ENCODE measurements at regions of chrX and their contacts with region 1.

Region 1: GRCh38 chrX:24081661-24082264 is 27.0 kb downstream of the EIF2S3 start:
- DNase-seq: peak; percentile 21
- H3K4me3 Mint-ChIP-seq: peak overlapping the region; percentile 11
- H3K27ac Mint-ChIP-seq: no peak overlapping the region
- H3K4me1 Mint-ChIP-seq: peaks cover 13% of the 10 kb centered on the region
- H3K27me3 Mint-ChIP-seq: no peaks in the 10 kb centered on the region

Region 2: DNA sequence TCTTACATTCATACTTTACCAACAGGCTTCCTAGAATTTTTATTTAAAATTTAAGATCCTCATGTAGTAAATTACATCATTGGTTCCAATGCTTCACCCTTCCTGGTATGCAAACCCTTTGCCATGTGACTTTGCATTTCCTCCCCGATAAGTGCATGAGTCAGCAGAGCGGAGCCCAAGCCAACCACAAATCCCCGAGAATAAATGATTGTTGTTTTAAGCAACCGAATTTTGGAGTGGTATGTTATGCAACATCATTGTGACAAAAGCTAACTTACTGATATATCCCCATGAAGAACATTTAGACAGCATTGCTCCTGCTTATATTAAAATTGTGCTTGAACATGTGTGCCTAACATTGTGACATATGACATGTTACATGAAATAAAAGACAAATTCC is 1281.4 kb before region 1 on chrX:
- intact Hi-C with region 1: no loop called
- DNase-seq: no peak
- H3K4me3 Mint-ChIP-seq: no peak overlapping the region
- H3K27ac Mint-ChIP-seq: no peak overlapping the region
- H3K4me1 Mint-ChIP-seq: no peaks in the 10 kb centered on the region
- H3K27me3 Mint-ChIP-seq: no peaks in the 10 kb centered on the region

Region 3: GRCh38 chrX:24241822-24242648 is 160.3 kb after region 1 on chrX:
- intact Hi-C with region 1: loop called (anchors 2 kb)
- DNase-seq: no peak
- H3K4me3 Mint-ChIP-seq: no peak overlapping the region
- H3K27ac Mint-ChIP-seq: no peak overlapping the region
- H3K4me1 Mint-ChIP-seq: peaks cover 8% of the 10 kb centered on the region
- H3K27me3 Mint-ChIP-seq: peaks cover 2% of the 10 kb centered on the region

Region 4: GRCh38 chrX:24828147-24828546 is 746.4 kb after region 1 on chrX:
- intact Hi-C with region 1: no loop called
- DNase-seq: no peak
- H3K4me3 Mint-ChIP-seq: no peak overlapping the region
- H3K27ac Mint-ChIP-seq: no peak overlapping the region
- H3K4me1 Mint-ChIP-seq: no peaks in the 10 kb centered on the region
- H3K27me3 Mint-ChIP-seq: no peaks in the 10 kb centered on the region